HCT116 (cell line): ENCODE measurements at regions of chr11 and their contacts with region 1.

Region 1: GRCh38 chr11:112289588-112290492 is 29.2 kb upstream of the PLET1 start:
- DNase-seq: no peak
- ATAC-seq: peak; percentile 98
- H3K4me3 ChIP-seq: peak overlapping the region; percentile 38 to 62
- H3K27ac ChIP-seq: no peak overlapping the region
- H3K4me1 ChIP-seq: peaks cover 2 to 25% of the 10 kb centered on the region in 2 experiments; a peak in 3 of 4 replicates
- H3K27me3 ChIP-seq: no peaks in the 10 kb centered on the region
- CTCF ChIP-seq: peak; percentile 70 to 80 (median 74)
- POLR2A ChIP-seq: no peak
- RAD21 ChIP-seq: peak; percentile 89

Region 2: DNA sequence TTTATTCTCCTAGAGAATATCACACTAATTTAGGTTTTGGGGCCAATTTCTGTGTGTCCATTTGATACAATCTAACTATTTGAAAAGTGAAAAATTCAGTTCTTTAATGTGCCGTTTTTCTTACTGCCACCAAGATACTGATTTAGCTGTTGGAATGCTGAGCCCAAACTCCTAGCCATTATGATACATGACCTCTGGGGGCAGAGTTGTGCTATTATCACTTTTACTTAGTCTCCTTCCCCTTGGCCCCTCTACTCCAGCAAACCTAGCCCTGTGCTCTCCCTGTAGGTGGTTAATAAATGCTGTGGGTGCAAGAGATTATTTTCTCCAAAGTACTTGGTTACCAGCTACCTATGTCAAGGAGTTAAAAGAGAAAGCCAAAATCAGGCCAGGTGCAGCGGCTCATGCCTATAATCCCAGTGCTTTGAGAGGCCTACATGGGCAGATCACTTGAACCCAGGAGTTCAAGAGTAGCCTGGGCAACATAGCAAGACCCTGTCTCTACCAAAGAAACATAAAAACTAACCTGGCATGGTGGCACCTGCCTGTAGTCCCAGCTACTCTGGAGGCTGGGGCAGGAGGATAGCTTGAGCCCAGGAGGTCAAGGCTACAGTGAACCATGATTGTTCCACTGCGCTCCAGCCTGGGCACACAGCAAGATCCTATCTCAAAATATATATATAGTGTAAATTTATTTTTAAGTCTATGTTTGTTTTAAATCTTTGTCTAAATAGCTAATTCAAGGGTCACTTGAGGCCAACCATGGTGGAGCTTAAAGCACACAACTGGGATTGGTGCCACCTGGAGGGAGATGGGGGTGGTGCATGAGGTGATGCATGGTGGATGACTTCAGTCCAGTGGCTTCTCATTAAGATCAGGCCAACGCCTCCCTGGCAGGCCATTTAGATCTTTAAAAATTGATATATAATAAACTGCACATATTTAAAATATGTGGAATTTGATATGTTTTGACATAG is 164.0 kb after region 1 on chr11:
- CTCF ChIA-PET with region 1: no interaction called
- POLR2A ChIA-PET with region 1: no interaction called
- RAD21 ChIA-PET with region 1: no interaction called
- intact Hi-C with region 1: loop called (anchors 2 kb)
- DNase-seq: peak; percentile 34
- ATAC-seq: peak; percentile 94
- H3K4me3 ChIP-seq: no peak overlapping the region
- H3K27ac ChIP-seq: no peak overlapping the region
- H3K4me1 ChIP-seq: no peaks in the 10 kb centered on the region
- H3K27me3 ChIP-seq: no peaks in the 10 kb centered on the region
- CTCF ChIP-seq: peak; percentile 46 to 80 (median 54); a peak in 5 of 6 replicates
- POLR2A ChIP-seq: no peak
- RAD21 ChIP-seq: peak; percentile 40

Region 3: DNA sequence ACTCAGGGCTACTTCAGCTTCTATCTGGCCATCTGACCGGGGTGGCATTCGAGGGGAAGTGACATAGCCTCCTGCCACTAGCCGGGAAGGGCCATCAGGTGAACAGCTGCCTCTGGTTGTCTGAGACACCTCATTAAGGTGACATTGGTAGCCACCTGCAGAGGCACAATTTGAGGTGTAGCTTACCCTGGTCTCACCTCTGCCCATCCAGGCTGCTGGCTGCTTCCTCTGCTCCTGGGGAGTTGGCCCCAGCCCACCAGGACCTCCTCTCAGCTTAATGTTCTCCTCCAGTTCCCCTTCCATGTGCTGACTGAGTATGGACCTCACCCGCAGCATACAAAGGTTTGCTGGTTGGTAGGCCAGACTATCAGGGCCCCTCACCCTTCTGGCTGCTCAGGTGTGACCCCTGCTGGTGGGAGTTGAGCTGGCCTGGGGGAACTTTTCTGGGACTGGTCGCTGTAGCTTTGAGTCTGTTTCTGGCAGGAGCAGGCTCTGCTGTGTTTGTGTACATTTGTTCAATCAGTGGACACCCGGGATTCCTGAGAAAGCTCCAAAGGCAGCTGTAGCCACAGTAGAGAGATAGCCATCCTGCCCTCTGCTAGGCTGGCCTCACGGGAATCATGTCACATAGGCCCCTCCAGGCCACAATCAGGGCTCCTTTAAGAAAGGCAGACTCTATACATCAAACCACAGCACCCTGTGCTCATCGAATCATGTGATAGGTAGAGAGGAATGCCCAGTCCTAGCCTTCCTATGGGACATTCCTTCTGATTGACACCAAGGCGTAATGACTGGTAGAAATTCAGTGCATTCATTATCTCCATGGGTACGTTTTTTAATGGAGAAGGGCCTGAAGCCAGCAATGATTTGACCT is 265.9 kb after region 1 on chr11:
- CTCF ChIA-PET with region 1: interaction called, 5 read pairs
- POLR2A ChIA-PET with region 1: no interaction called
- RAD21 ChIA-PET with region 1: no interaction called
- intact Hi-C with region 1: loop called (anchors 1 kb)
- DNase-seq: peak; percentile 8
- ATAC-seq: peak; percentile 89
- H3K4me3 ChIP-seq: no peak overlapping the region
- H3K27ac ChIP-seq: no peak overlapping the region
- H3K4me1 ChIP-seq: no peaks in the 10 kb centered on the region
- H3K27me3 ChIP-seq: peaks cover 19% of the 10 kb centered on the region; the same call in 1 of the 2 replicates
- CTCF ChIP-seq: peak; percentile 50 to 85 (median 72); a peak in 5 of 6 replicates
- POLR2A ChIP-seq: no peak
- RAD21 ChIP-seq: peak; percentile 56

Region 4: DNA sequence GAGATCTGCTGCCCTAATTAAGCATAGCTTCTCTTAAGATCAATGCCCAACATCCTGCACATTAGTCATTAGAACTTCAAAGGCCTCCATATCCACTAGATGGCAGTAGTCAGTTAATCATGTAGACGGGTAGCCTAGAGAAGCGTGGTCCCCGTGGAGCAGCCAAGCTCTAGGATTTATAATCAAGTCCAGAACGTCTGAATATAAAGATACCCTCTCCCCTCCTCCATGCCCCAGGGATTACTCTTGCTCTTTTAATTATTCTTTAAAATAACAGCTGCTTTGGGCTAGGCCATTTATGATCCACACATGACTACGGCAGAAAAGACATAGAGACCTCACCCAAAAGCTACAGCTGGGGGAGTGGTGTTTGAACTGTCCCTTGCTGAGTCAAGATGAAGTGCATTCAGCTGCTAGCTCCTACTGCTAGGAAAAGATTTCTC is 298.4 kb after region 1 on chr11:
- CTCF ChIA-PET with region 1: no interaction called
- POLR2A ChIA-PET with region 1: no interaction called
- RAD21 ChIA-PET with region 1: interaction called in 1 of 2 experiments, 3 read pairs
- intact Hi-C with region 1: loop called (anchors 1 kb)
- DNase-seq: peak; percentile 83
- ATAC-seq: peak; percentile 94
- H3K4me3 ChIP-seq: no peak overlapping the region
- H3K27ac ChIP-seq: no peak overlapping the region
- H3K4me1 ChIP-seq: no peaks in the 10 kb centered on the region
- H3K27me3 ChIP-seq: 0 out of 2 replicates have a peak, but pooled peaks cover 4% of the 10 kb centered on the region
- CTCF ChIP-seq: peak; percentile 64 to 85 (median 81)
- POLR2A ChIP-seq: no peak
- RAD21 ChIP-seq: peak; percentile 93

Region 5: GRCh38 chr11:112795142-112795815 is 505.4 kb after region 1 on chr11:
- CTCF ChIA-PET with region 1: no interaction called
- POLR2A ChIA-PET with region 1: no interaction called
- RAD21 ChIA-PET with region 1: no interaction called
- intact Hi-C with region 1: loop called (anchors 5 kb)
- DNase-seq: peak; percentile 38
- ATAC-seq: peak; percentile 97
- H3K4me3 ChIP-seq: no peak overlapping the region
- H3K27ac ChIP-seq: no peak overlapping the region
- H3K4me1 ChIP-seq: no peaks in the 10 kb centered on the region
- H3K27me3 ChIP-seq: 0 out of 2 replicates have a peak, but pooled peaks cover 5% of the 10 kb centered on the region
- CTCF ChIP-seq: peak; percentile 69 to 91 (median 82); a peak in 5 of 6 replicates
- POLR2A ChIP-seq: no peak
- RAD21 ChIP-seq: peak; percentile 67

Region 6: DNA sequence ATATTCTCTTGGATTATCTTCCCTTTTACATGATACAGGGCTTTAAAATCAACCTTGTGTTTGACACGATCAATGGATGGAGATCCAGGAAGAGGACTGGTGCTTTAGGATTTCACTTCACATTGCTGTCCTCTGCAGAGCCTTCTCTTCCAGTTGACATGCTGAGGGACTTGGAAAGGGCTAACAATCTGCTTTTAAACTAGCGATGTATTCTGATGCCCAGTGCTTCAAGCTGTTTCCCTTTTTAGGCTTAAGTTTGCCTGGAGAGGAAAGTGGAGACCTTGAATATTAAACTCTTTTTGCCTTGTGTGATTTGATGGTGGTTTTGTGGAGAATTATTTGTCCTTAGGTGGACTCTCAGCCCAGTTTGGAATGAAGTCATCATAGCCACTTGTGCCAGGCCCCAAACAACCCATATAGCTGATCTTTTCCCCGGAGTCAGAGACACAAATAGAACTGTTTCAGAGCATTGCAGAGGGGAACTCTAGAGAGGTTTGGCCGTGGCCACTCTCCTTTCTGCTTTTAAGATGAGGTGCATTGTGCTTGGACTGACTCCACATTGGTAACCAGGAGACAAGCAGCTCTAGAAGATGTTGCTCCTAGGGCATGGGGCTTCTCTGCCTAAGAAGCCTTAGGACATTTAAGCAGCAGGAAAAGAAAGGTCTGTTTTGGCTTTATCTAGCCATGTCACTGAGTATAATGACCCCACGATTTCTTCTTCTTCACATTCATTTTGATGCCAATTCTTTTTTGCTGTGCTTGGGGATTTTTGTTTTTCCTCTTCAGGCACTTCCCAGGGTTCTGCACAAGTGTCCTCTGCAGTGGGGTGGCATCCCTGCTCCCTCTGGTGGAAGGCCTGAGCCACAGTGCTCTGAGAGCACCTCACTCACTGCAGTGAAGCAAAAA is 824.2 kb after region 1 on chr11:
- CTCF ChIA-PET with region 1: no interaction called
- POLR2A ChIA-PET with region 1: no interaction called
- RAD21 ChIA-PET with region 1: no interaction called
- intact Hi-C with region 1: loop called (anchors 10 kb)
- DNase-seq: no peak
- ATAC-seq: peak; percentile 98
- H3K4me3 ChIP-seq: no peak overlapping the region
- H3K27ac ChIP-seq: no peak overlapping the region
- H3K4me1 ChIP-seq: no peaks in the 10 kb centered on the region
- H3K27me3 ChIP-seq: peaks cover 41% of the 10 kb centered on the region; the same call in 1 of the 2 replicates
- CTCF ChIP-seq: peak; percentile 35 to 66 (median 58); a peak in 4 of 6 replicates
- POLR2A ChIP-seq: no peak
- RAD21 ChIP-seq: peak; percentile 63

Region 7: GRCh38 chr11:113289431-113290187 is 999.8 kb after region 1 on chr11:
- CTCF ChIA-PET with region 1: interaction called, 8 read pairs
- POLR2A ChIA-PET with region 1: no interaction called
- RAD21 ChIA-PET with region 1: no interaction called
- intact Hi-C with region 1: loop called (anchors 1 kb)
- DNase-seq: peak; percentile 21
- ATAC-seq: peak; percentile 96
- H3K4me3 ChIP-seq: no peak overlapping the region
- H3K27ac ChIP-seq: no peak overlapping the region
- H3K4me1 ChIP-seq: no peaks in the 10 kb centered on the region
- H3K27me3 ChIP-seq: peaks cover 44% of the 10 kb centered on the region
- CTCF ChIP-seq: peak; percentile 60 to 90 (median 88)
- POLR2A ChIP-seq: no peak
- RAD21 ChIP-seq: peak; percentile 90